ENCODE measurements at regions of chr2 and their contacts with region 1.

Region 1: GRCh38 chr2:224585205-224586088 is at the start of gene CUL3:
- DNase-seq: peak; percentile 99
- ATAC-seq: peak; percentile 97 to 98 (median 98)
- H3K4me3 ChIP-seq: peak within 1 kb of the TSS; percentile 91
- H3K27ac ChIP-seq: peak within 1 kb of the TSS; percentile 96
- H3K4me1 ChIP-seq: peaks cover 33% of the 10 kb centered on the region
- H3K27me3 ChIP-seq: no peaks in the 10 kb centered on the region
- CTCF ChIP-seq: no peak
- total RNA-seq, gene CUL3: 103 to 173 (median 126) TPM

Region 2: GRCh38 chr2:223957092-223957851 is 628.2 kb before region 1 on chr2 and contains the start of gene MRPL44:
- intact Hi-C with region 1: loop called in 1 of 2 experiments (anchors 5 kb)
- DNase-seq: peak; percentile 96 to 98
- ATAC-seq: peak; percentile 99 to 100 (median 99)
- H3K4me3 ChIP-seq: peak within 1 kb of the TSS; percentile 85
- H3K27ac ChIP-seq: peak within 1 kb of the TSS; percentile 85
- H3K4me1 ChIP-seq: peaks cover 45% of the 10 kb centered on the region
- H3K27me3 ChIP-seq: no peaks in the 10 kb centered on the region
- CTCF ChIP-seq: no peak
- total RNA-seq, gene MRPL44: 26.4 to 37.9 (median 28.1) TPM

Region 3: GRCh38 chr2:224412141-224413015 is 173.1 kb before region 1 on chr2:
- intact Hi-C with region 1: loop called in 1 of 2 experiments (anchors 10 kb)
- DNase-seq: peak in 1 of 2 donors; percentile 66
- ATAC-seq: peak; percentile 65 to 93 (median 87)
- H3K4me3 ChIP-seq: peak overlapping the region; percentile 29
- H3K27ac ChIP-seq: peak overlapping the region; percentile 64
- H3K4me1 ChIP-seq: peaks cover 9% of the 10 kb centered on the region
- H3K27me3 ChIP-seq: no peaks in the 10 kb centered on the region
- CTCF ChIP-seq: no peak

Region 4: GRCh38 chr2:224492531-224492930 is 92.9 kb before region 1 on chr2:
- intact Hi-C with region 1: loop called in 1 of 2 experiments (anchors 10 kb)
- DNase-seq: no peak
- ATAC-seq: peak in 3 of 4 donors; percentile 26 to 68 (median 52)
- H3K4me3 ChIP-seq: no peak overlapping the region
- H3K27ac ChIP-seq: no peak overlapping the region
- H3K4me1 ChIP-seq: no peaks in the 10 kb centered on the region
- H3K27me3 ChIP-seq: no peaks in the 10 kb centered on the region
- CTCF ChIP-seq: no peak